ENCODE measurements at regions of chr1 and their contacts with region 1.

Region 1: DNA sequence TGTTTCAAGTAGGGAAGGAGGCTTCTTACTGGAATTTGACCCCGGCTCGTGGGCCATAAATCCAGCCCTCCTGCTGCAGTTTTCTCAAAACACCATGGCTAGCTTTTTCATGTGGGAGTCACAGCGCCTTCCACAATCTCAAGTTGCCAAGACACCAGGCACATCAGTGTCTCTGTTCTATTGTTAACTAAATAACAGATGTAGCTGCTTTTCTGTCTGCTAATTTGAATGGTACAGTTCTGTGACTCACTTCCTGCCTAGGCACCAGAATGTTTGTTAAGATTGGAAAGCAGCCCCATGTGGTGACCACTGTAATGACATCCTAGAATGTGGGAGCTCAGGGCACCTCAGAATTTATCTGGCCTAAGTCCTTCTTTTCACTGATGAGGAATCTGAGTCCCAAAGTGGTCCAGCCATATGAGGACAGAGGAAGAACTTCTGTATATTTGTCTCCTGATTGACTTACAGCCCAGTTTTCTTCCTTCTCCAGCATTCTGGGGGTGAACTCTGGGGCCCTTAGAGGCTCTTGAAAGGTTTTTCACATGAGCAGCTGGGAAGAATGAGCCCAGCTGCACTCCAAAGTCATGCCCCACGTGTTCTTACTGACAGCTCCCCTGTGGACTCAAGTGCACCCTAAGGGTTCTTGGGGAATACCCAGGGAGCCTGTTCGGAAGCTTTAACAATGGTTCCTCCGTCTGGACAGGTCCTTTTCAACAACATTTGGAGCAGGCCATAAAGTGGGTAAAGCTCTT is 27.5 kb downstream of the TRIM45 start:
- DNase-seq: peak; percentile 90
- H3K4me3 ChIP-seq: peak overlapping the region in 1 of 3 experiments; percentile 31
- H3K27ac ChIP-seq: peak overlapping the region; percentile 99
- H3K4me1 ChIP-seq: peaks cover 35% of the 10 kb centered on the region
- H3K27me3 ChIP-seq: no peaks in the 10 kb centered on the region
- CTCF ChIP-seq: peak; percentile 36
- POLR2A ChIP-seq: no peak

Region 2: DNA sequence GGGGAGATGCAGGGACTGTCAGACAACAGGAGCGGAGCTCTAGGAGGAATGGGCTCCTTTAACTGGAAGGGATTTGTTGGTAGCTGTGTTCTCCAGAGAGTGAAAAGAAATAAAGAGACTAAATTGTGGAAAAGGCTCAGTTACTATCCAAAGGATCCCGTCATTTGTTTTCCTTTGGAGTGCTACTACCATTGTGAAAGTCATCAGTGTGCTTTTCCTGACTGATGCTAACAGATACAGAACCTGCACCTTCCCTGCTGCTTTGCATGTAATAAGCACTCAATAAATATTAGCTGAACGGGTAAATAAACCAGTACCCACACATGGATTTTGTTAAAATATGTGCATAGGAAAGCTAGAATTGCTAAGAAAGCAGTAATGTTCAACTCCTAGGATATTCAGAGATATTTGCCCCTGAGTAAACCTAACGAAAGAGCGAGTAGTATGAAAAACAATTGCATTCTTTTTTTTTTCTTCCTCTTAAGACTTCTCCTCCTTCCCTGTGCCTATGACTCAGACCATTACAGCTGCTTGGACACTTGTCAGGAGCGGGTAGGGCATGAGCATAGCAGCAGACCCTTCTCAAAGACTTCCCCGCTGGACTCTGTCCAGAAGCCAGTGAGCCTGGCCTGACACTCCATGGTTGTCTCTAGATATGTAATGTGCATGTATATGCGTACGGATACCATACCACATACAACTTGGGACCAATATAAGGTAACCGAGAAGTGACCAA is 142.7 kb before region 1 on chr1:
- CTCF ChIA-PET with region 1: no interaction called
- POLR2A ChIA-PET with region 1: no interaction called
- dilution Hi-C with region 1: no loop called
- intact Hi-C with region 1: no loop called
- DNase-seq: peak; percentile 77
- H3K4me3 ChIP-seq: no peak overlapping the region
- H3K27ac ChIP-seq: no peak overlapping the region
- H3K4me1 ChIP-seq: peaks cover 7% of the 10 kb centered on the region
- H3K27me3 ChIP-seq: no peaks in the 10 kb centered on the region
- CTCF ChIP-seq: no peak
- POLR2A ChIP-seq: no peak

Region 3: GRCh38 chr1:117067533-117068370 is 26.3 kb before region 1 on chr1:
- CTCF ChIA-PET with region 1: interaction called, 42 read pairs
- POLR2A ChIA-PET with region 1: no interaction called
- dilution Hi-C with region 1: no loop called
- intact Hi-C with region 1: loop called (anchors 2 kb)
- DNase-seq: peak; percentile 51
- H3K4me3 ChIP-seq: no peak overlapping the region
- H3K27ac ChIP-seq: no peak overlapping the region
- H3K4me1 ChIP-seq: no peaks in the 10 kb centered on the region
- H3K27me3 ChIP-seq: no peaks in the 10 kb centered on the region
- CTCF ChIP-seq: peak; percentile 64 to 77
- POLR2A ChIP-seq: no peak

Region 4: DNA sequence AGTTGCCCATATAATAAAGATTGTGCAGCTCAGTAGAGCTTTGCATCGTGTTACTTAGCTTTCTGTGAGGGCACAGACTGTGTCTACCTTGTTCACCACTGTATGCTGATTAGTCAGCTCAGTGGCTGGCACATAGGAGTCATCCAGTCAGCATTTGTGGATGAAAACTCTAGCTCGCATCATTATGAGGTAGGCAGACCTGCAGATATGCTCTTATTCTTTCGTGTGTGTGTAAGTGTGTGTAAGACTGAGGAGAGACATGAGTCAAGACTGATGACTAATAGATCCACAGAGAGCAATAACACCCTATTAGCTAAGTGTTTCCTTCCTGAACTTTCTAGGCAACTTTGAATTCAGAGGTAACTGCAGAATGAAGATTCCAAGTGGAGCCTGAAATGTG is 16.8 kb before region 1 on chr1:
- CTCF ChIA-PET with region 1: interaction called, 33 read pairs
- POLR2A ChIA-PET with region 1: interaction called, 7 read pairs
- dilution Hi-C with region 1: no loop called
- intact Hi-C with region 1: loop called (anchors 1 kb)
- DNase-seq: peak; percentile 90
- H3K4me3 ChIP-seq: no peak overlapping the region
- H3K27ac ChIP-seq: peak overlapping the region; percentile 36
- H3K4me1 ChIP-seq: peaks cover 13% of the 10 kb centered on the region
- H3K27me3 ChIP-seq: no peaks in the 10 kb centered on the region
- CTCF ChIP-seq: no peak
- POLR2A ChIP-seq: no peak

Region 5: GRCh38 chr1:117110774-117111173 is 16.7 kb after region 1 on chr1:
- CTCF ChIA-PET with region 1: interaction called, 18 read pairs
- POLR2A ChIA-PET with region 1: interaction called, 3 read pairs
- dilution Hi-C with region 1: no loop called
- intact Hi-C with region 1: no loop called
- DNase-seq: peak; percentile 25
- H3K4me3 ChIP-seq: no peak overlapping the region
- H3K27ac ChIP-seq: no peak overlapping the region
- H3K4me1 ChIP-seq: peaks cover 10% of the 10 kb centered on the region
- H3K27me3 ChIP-seq: no peaks in the 10 kb centered on the region
- CTCF ChIP-seq: no peak
- POLR2A ChIP-seq: no peak

Region 6: GRCh38 chr1:117121776-117122697 is 28.0 kb after region 1 on chr1:
- CTCF ChIA-PET with region 1: interaction called, 70 read pairs
- POLR2A ChIA-PET with region 1: interaction called, 5 read pairs
- dilution Hi-C with region 1: no loop called
- intact Hi-C with region 1: loop called (anchors 1 kb)
- DNase-seq: peak; percentile 98
- H3K4me3 ChIP-seq: peak overlapping the region; percentile 48 to 86 (median 74)
- H3K27ac ChIP-seq: peak overlapping the region; percentile 90
- H3K4me1 ChIP-seq: peaks cover 10% of the 10 kb centered on the region
- H3K27me3 ChIP-seq: peaks cover 11 to 25% of the 10 kb centered on the region in 2 experiments
- CTCF ChIP-seq: peak; percentile 88 to 91
- POLR2A ChIP-seq: no peak

Region 7: DNA sequence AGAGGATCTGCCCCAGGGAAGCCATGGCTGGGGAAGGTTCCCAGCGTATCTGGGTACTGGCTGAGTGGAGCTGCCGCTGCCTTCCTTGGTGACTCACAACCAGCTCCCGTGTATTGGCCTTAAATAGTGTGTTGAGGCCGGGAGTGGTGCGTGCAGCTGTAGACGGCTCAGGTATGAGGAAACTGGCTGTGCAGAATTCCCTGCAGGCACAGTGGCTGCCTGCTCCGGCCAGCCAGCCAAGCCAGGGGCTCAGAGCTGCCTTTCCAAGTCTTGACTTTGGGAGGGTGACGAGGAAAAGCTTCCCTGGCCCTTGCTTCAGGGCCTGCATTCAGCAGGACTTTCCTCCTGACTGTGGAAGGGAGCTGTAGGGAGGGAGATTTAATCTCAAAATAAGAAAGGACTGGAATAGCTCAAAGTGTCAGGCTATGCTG is 116.8 kb after region 1 on chr1 and contains the start of gene VTCN1:
- CTCF ChIA-PET with region 1: no interaction called
- POLR2A ChIA-PET with region 1: no interaction called
- dilution Hi-C with region 1: no loop called
- intact Hi-C with region 1: no loop called
- DNase-seq: no peak
- H3K4me3 ChIP-seq: no peak within 1 kb of the TSS
- H3K27ac ChIP-seq: no peak within 1 kb of the TSS
- H3K4me1 ChIP-seq: no peaks in the 10 kb centered on the region
- H3K27me3 ChIP-seq: no peaks in the 10 kb centered on the region
- CTCF ChIP-seq: no peak
- POLR2A ChIP-seq: no peak
- total RNA-seq, gene VTCN1: not detected in 2 replicates

Measured in endothelial cell of umbilical vein (primary cell).